Left ventricle myocardium superior (tissue), 1 donor: ENCODE measurements at regions of chr1 and their contacts with region 1.

Region 1: GRCh38 chr1:151739590-151740375 is 18.5 kb downstream of the RIIAD1 start:
- DNase-seq: no peak
- ATAC-seq: no peak

Region 2: GRCh38 chr1:151327903-151328674 is 411.7 kb before region 1 on chr1:
- intact Hi-C with region 1: no loop called
- DNase-seq: peak; percentile 46
- ATAC-seq: peak; percentile 42

Region 3: DNA sequence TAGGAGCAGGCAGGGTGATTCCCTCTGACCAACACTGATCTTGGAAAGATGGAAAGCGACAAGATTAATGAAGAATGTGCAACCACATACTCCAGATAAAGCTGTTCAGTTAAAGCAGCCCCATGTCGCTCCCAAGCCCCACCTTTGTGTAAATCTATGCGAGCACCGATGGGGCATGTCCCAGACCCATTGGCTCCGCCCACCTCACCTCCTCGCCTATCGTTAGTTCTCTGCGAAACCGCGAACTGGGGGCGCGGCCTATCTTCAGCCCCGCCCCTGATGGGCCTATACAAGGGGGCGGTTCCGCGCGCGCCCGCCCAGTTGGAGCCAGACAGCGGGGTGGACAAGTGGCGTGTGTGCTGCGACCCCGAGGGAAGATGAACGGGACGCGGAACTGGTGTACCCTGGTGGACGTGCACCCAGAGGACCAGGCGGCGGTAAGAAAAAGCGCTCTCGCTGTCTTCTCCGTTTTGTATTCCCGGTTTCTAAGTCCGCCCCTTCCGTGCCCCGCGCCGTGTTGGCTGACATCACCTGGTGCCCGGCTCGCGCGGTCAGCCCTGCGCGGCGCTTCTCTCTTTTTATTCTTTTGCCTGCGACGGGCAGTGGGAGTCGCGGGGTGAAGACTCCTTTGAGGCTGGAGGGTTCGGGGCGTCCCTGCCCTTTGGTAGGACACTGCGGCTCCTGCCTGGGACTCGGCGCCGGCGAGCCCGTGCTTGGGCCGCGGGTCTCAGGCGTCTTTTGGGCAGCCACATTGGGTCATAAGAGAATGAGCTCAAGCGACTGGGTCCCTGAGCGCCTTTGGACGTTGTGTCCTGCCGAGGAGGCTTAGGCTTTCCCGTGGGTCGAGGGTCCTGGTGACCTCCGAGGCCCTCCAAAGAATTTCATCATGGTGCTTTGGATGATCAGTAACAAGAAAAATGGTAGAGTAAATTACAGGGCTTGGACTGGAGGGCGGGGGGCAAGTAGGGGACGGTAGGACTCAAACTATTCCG is 199.5 kb before region 1 on chr1 and contains the start of gene TUFT1:
- intact Hi-C with region 1: loop called (anchors 10 kb)
- DNase-seq: peak; percentile 96
- ATAC-seq: peak; percentile 98
- total RNA-seq, gene TUFT1: 3.1 TPM

Region 4: DNA sequence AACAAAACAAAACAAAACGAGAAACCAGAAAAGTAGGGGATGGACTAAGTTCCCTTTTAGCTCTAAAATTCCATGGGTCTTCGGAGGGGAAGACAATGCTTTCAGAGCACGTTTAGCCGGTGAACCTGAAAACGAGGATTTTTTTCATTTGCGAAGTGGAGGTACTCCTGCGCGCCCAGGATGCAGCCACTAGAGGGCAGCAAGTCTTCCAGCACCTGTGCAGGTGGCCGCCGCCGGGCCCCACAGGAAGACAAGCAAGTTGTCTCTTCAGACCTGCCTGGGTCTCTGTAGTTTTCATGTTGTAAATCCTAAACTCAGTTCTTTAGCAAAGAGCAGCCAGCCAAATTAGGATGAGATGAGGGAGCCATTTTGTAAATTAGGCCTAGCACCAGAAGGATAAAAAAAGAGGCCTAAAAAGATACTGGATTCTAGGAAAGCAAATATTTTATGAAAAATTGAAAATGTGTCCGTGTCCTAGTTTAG is 145.6 kb before region 1 on chr1:
- intact Hi-C with region 1: loop called (anchors 10 kb)
- DNase-seq: peak; percentile 86
- ATAC-seq: peak; percentile 70

Region 5: DNA sequence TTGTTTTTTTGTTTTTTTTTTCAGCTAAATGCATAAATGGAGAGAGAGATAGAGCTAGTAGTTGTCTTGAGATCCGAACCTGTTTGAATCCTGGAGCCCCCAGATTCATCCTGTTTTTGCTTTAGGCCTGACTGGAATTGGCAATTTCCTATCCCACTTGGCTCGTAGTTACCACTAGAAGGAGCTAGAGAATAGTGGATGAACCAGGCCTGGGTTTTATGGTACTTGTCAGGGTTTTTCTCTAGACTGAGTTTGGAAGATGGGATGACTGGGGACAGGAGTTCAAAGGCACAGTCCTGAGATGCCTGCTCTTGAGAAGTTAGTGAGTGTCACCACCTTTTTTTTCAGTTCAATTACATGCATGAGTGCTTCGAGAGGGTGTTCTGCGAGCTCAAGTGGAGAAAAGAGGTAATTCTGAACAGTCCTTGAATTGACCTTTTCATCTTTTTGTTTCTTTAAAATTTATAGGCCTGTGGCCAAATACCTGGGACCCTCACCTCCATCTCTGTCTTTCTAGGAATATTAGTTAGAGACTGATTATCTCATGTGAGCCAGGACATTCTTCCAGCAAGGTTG is 46.6 kb before region 1 on chr1:
- intact Hi-C with region 1: loop called (anchors 5 kb)
- DNase-seq: no peak
- ATAC-seq: peak; percentile 34